Naive thymus-derived CD8-positive, alpha-beta T cell (primary cell): ENCODE measurements at regions of chrX and their contacts with region 1.

Region 1: DNA sequence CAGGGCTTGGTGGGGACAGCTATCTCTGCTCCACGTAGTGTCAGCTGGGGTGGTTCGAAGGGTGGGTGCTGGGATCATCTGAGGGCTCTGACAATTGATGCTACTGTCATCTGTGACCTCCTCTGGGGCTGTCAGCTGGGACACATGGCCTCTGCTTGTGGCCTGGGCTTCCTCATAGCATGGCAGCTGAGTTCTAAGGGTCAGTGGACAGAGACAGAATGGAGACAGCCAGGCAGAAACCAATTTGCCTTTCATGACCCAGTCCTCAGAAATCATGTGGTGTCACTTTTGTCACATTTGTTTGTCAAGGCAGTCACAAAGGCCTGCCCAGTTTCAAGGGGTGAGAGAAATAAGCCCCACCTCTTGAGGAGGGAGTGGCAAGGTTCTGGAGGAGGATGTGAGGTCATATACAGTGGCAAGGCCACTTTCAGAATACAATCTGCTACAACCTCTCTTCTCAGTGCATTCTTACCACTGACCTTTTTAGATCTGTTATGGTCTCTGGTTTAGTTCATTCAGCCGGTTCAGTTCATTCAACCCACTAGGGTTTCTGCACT is 103.6 kb upstream of the BCOR start:
- DNase-seq: peak in 5 of 10 donors; percentile 9 to 32 (median 20)
- ATAC-seq: peak; percentile 62 to 95
- H3K4me3 Mint-ChIP-seq: peak overlapping the region in 5 of 10 donors; percentile 55 to 62 (median 59)
- H3K27ac Mint-ChIP-seq: peak overlapping the region in 7 of 10 donors; percentile 23 to 86 (median 62)
- H3K4me1 Mint-ChIP-seq: peaks cover 2 to 24% (median 20%) of the 10 kb centered on the region in 4 donors
- H3K27me3 Mint-ChIP-seq: no peaks in the 10 kb centered on the region

Region 2: GRCh38 chrX:39859991-39860861 is 341.2 kb before region 1 on chrX:
- POLR2A ChIA-PET with region 1: interaction called, 11 read pairs
- DNase-seq: peak in 5 of 10 donors; percentile 21 to 68 (median 26)
- ATAC-seq: peak; percentile 6 to 34
- H3K4me3 Mint-ChIP-seq: peak overlapping the region in 5 of 10 donors; percentile 14 to 72 (median 60)
- H3K27ac Mint-ChIP-seq: peak overlapping the region in 8 of 10 donors; percentile 2 to 86 (median 56)
- H3K4me1 Mint-ChIP-seq: peaks cover 2 to 37% (median 27%) of the 10 kb centered on the region in 4 donors
- H3K27me3 Mint-ChIP-seq: no peaks in the 10 kb centered on the region